Mammary epithelial cell (primary cell): ENCODE measurements at regions of chr17 and their contacts with region 1.

Region 1: DNA sequence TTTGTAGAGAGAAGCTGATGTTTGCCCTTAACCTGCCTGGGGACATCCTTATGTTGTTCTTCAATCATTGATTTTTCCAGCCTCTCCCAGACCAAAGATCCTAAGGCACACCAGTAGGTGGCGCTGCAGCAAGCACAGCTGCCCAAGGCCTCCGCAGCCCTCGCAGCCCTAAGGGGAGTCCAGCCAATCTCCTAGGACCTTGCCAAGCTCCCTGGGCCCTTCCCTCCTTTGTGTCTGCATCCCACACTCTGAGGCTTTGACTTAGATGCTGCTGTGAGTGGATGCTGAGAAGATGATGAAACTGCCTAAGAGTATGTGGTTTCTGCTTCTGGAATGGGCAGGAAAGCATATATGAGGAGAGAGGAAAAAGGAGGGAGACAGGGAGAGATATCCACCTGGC is 47.1 kb downstream of the SPACA3 start:
- DNase-seq: peak; percentile 54
- H3K4me3 ChIP-seq: no peak overlapping the region
- H3K27ac ChIP-seq: no peak overlapping the region
- H3K4me1 ChIP-seq: peaks cover 26% of the 10 kb centered on the region
- H3K27me3 ChIP-seq: no peaks in the 10 kb centered on the region
- CTCF ChIP-seq: peak; percentile 86 to 87

Region 2: DNA sequence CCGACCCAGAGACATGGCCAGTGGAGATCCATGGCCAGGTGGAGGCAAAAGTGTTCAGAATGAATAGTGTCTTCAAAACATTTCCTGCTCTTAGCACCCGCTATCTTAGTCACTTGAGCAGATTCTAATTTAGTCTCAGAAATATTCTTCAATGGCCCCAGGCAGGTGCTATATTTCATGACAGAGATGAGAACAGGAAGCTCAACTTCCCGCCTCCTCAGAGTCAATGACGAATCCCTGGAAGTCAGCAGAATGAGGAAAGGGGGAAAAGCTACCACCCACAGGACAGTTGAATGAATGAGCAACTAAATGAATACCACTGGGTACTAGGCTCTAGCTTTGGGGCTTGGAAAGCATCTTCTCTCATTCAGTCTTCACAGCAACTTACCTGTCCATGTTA is 107.2 kb after region 1 on chr17:
- CTCF ChIA-PET with region 1: no interaction called
- dilution Hi-C with region 1: no loop called
- in situ Hi-C with region 1: no loop called
- intact Hi-C with region 1: loop called (anchors 5 kb)
- DNase-seq: no peak
- H3K4me3 ChIP-seq: no peak overlapping the region
- H3K27ac ChIP-seq: no peak overlapping the region
- H3K4me1 ChIP-seq: peaks cover 6% of the 10 kb centered on the region
- H3K27me3 ChIP-seq: no peaks in the 10 kb centered on the region
- CTCF ChIP-seq: no peak

Region 3: GRCh38 chr17:33292184-33292980 is 253.6 kb after region 1 on chr17:
- CTCF ChIA-PET with region 1: no interaction called
- dilution Hi-C with region 1: no loop called
- in situ Hi-C with region 1: no loop called
- intact Hi-C with region 1: loop called (anchors 1 kb)
- DNase-seq: peak; percentile 50
- H3K4me3 ChIP-seq: peak overlapping the region; percentile 36 to 52 (median 36)
- H3K27ac ChIP-seq: no peak overlapping the region
- H3K4me1 ChIP-seq: peaks cover 18% of the 10 kb centered on the region
- H3K27me3 ChIP-seq: peaks cover 3% of the 10 kb centered on the region
- CTCF ChIP-seq: peak; percentile 9 to 43

Region 4: GRCh38 chr17:33647956-33648355 is 609.2 kb after region 1 on chr17:
- CTCF ChIA-PET with region 1: interaction called, 10 read pairs
- dilution Hi-C with region 1: no loop called
- in situ Hi-C with region 1: loop called in 1 of 2 experiments (anchors 10 kb)
- intact Hi-C with region 1: loop called (anchors 1 kb)
- DNase-seq: peak; percentile 2
- H3K4me3 ChIP-seq: no peak overlapping the region
- H3K27ac ChIP-seq: no peak overlapping the region
- H3K4me1 ChIP-seq: no peaks in the 10 kb centered on the region
- H3K27me3 ChIP-seq: peaks cover 2% of the 10 kb centered on the region
- CTCF ChIP-seq: peak; percentile 37 to 77

Region 5: DNA sequence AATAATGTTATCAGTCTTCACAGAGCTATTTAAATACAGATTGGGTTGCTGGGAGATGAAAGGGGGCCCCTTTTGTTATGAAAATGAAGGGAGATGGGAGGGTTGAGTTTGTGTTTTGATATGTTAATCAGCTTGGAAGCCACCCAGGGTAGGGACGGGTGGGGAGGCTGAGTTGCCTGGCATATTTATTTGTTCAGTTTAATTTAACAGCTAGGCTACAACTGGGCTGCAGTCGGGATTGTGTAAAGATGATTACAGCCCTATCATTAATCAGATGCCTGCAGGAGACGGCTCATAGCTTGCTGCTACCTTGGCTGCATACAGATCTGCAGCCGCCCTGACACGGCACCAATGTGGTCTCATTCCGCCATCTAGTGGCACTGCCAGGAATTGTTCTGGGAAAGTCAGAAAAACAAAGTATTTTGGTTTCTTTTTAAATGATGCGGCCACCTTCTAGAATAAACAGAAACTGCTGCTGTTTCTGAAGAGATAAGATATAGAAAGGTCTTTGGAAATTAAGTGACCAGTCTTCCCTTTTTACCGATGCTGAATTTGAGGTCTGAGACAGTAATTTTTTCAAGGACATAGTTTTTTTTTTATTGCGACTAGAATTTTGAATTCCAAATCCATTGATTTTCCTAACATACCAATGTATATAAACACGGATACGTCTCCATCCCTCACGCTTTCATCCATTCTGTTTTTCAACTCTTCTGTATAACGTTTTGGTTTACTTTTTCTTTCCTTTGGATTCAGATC is 712.4 kb after region 1 on chr17:
- CTCF ChIA-PET with region 1: interaction called, 8 read pairs
- dilution Hi-C with region 1: no loop called
- in situ Hi-C with region 1: no loop called
- intact Hi-C with region 1: loop called (anchors 1 kb)
- DNase-seq: peak; percentile 28
- H3K4me3 ChIP-seq: peak overlapping the region in 2 of 3 experiments; percentile 32 to 33
- H3K27ac ChIP-seq: no peak overlapping the region
- H3K4me1 ChIP-seq: no peaks in the 10 kb centered on the region
- H3K27me3 ChIP-seq: no peaks in the 10 kb centered on the region
- CTCF ChIP-seq: peak; percentile 85 to 89